HEK293T (cell line): ENCODE measurements at regions of chr1 and their contacts with region 1.

Region 1: DNA sequence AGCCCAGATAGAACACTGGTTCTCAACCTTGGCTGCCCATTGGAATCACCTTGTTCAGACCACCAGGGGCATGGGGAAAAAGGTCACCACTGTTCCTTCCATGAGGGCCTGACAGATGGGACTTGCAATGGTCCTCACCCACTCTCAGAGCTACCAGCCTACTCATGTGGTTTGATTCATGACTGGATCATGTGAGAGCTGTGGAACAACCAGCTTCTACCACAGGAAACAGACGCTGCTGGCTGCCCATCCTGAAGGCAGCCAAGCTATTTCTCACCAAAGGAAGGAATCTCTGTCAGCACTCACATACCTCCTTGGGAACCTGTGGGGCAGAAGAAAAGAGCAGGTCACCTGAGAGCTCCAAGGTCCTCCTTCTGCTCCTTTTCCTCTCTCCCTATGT is 53.6 kb downstream of the CAPN8 start:
- DNase-seq: no peak

Region 2: DNA sequence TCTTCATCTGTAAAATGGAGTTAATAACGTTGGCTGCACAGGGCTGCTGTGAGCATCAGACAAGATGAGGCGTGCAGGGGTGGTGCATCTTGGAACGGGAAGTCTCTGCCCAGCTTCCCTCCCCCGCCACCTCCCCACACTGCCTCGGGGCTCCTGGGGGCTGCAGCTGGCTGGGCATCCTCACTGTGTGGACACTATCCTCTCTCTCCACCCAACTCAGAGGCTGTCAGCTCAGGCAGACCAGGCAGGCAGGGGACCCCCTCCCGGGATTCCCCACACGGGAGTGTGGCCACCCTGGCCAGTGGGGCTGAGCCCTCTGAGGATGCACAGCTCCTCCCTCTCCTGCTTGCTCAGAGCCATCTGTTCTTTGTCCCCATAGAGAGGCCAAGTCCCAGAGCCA is 96.0 kb before region 1 on chr1:
- CTCF ChIA-PET with region 1: no interaction called
- POLR2A ChIA-PET with region 1: no interaction called
- DNase-seq: no peak

Region 3: GRCh38 chr1:223628233-223629125 is 16.5 kb after region 1 on chr1:
- CTCF ChIA-PET with region 1: interaction called, 13 read pairs
- POLR2A ChIA-PET with region 1: no interaction called
- DNase-seq: peak; percentile 90